Right ventricle myocardium inferior (tissue), 1 donor: ENCODE measurements at regions of chr4 and their contacts with region 1.

Region 1: GRCh38 chr4:185774845-185775680 is 36.9 kb downstream of the SORBS2 start:
- DNase-seq: no peak
- ATAC-seq: no peak

Region 2: GRCh38 chr4:185656467-185656931 is 118.6 kb before region 1 on chr4:
- intact Hi-C with region 1: loop called (anchors 5 kb)
- DNase-seq: no peak
- ATAC-seq: peak; percentile 69

Region 3: GRCh38 chr4:185716577-185717376 is 58.3 kb before region 1 on chr4:
- intact Hi-C with region 1: loop called (anchors 5 kb)
- DNase-seq: peak; percentile 60
- ATAC-seq: peak; percentile 62

Region 4: DNA sequence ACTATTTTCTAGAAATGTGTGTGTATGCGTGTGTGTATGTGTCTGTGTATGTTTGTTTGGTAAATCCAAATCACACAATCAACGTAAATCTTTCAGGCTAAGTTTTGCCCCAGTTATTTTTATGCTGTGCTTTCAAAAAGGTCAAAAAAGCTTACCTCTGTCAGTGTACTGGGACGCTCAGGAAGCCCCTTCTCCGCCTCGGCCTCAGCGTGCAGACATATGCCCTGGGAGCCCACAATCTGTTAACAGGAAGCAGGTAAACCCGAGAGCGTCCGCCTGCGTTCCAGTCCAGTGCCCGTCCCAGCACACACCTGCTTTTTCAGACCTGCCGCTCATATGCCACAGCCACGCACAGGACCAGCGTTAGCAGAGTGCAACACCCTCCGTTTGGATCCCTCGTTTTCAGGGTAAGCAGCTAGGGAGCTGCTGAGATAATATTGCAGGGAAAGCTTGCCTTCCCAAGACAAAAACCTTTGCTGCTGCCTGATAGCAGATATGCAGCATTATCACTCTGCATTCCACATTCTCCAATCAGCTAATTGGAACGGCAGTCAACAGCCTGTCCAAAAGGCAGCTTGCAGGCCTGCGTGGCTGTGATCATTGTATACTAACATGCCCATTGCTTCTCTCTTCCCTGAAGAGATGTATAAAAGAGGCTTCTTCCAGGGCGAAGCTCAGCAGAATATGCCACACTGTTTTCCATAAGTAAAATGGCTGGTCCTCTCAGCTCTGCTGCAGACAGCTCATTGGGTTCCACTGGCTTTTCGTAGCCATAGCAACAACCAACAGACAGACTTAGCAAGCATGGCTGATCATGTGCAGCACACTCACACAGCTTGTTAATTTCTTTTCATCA is 36.7 kb after region 1 on chr4 and contains the start of gene SORBS2:
- intact Hi-C with region 1: loop called (anchors 5 kb)
- DNase-seq: no peak
- ATAC-seq: peak; percentile 74
- total RNA-seq, gene SORBS2: 828 TPM

Region 5: DNA sequence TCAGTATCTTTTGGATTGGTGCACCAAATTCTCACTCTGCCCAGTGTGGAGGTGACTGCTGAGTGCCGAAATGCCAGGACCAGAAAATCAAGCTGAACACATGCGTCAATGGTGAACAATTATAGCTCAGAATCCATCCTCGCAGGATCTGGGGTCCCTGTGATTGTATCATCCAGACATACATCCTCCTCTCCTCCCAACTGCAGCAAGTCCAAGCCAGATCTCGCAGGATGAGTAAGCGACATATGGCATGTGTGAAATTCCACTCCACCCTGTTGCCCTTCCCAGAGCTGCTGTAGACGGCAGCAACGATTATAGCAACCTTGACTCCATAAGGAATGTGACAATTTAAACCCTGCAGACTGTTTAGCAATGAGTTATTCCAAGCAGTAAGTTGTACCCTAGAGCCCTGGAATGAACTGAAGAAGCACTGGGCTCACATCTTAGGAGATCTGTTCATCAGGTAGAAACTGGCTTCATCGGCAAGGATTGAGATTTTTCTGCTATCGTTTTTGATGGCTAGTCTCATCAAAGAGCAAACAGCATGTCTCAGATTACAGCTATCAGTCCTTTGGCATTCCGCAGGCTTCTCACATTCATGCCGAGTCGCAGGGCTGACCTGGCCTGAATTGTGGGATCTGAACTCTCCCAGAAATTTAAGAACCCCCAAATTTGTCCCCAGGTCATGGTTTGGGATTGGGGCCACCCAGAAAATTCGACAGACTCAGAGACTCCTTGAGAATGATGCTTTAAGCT is 72.5 kb after region 1 on chr4:
- intact Hi-C with region 1: loop called (anchors 2 kb)
- DNase-seq: peak; percentile 80
- ATAC-seq: peak; percentile 87

Region 6: DNA sequence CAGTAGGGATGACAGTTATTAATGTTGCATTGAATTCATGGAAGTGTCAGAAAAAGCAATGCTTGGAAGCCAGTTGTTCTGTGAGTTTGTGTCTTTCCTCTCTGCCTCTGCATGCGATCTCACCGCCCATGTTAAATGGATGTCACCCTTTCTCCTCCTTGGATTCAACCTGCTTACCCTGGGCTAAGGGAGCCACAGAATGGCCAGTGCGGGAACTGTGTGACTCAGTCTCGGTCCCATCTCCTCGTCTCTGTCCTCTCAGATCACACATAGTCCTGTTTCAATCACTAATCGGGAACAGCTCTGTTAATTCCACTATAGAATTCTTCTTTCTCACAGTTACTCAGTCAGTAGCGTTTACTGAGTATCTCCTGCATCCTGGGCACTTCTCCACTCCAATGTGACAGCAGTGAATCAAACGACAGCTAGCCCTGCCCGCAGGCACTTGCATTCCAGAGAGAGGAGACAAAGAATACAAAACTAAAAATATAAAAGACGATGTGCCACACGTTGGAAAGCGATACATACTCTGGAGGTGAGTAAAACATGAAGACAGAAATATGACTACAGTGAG is 240.2 kb after region 1 on chr4:
- intact Hi-C with region 1: loop called (anchors 5 kb)
- DNase-seq: no peak
- ATAC-seq: peak; percentile 85